ENCODE measurements at regions of chr19 and their contacts with region 1.

Region 1: DNA sequence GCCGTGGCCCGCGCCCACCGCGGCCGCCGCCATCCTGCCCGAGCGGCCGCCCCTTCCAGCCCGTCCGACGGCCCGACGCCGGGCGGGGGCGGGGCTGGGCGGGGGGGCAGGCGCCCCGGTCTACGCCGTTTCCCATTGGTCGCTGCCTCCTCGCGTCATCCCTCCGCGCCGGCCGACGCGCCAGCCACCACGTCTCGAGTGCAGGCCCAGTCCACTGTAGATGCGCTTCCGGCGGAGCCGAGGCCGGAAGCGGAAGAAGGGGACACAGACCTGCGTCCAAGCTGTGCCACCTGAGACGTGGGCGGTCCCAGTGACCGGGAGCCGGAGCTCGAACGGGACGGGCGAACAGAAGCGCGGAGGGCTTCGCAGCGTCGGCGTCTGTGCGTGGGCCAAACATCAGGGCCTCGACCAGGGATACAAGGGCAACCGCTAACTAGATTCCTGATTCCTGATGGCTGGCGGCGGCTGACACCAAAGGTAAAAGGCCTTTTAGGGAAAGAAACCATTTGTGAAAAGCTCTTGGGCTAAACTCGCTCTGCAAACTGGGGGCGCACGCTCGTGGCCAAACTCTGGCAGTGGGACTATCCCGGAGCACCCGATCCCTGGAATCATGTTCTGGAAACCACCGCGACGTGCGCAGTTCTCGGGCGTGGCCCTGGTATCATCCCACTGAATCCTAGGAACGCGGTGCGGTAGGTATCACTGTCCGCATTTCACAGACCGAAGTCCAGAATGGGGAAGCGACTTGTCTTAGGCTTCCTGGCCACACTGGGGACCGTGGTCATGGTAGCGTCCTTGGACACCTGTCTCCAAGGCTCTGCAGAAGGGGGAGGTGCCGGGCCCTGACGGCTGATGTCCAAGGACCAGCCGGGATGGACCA is at the start of gene SLC35E1:
- DNase-seq: peak; percentile 97
- H3K4me3 ChIP-seq: peak within 1 kb of the TSS; percentile 77 to 93 (median 89)
- H3K27ac ChIP-seq: peak within 1 kb of the TSS; percentile 90 to 95 (median 91)
- H3K4me1 ChIP-seq: peaks cover 16 to 34% (median 27%) of the 10 kb centered on the region in 4 donors
- H3K27me3 ChIP-seq: no peaks in the 10 kb centered on the region
- CTCF ChIP-seq: no peak
- EP300 ChIP-seq: peak; percentile 28
- POLR2A ChIP-seq: peak; percentile 86
- total RNA-seq, gene SLC35E1: 31.0 to 56.1 (median 42.8) TPM

Region 2: DNA sequence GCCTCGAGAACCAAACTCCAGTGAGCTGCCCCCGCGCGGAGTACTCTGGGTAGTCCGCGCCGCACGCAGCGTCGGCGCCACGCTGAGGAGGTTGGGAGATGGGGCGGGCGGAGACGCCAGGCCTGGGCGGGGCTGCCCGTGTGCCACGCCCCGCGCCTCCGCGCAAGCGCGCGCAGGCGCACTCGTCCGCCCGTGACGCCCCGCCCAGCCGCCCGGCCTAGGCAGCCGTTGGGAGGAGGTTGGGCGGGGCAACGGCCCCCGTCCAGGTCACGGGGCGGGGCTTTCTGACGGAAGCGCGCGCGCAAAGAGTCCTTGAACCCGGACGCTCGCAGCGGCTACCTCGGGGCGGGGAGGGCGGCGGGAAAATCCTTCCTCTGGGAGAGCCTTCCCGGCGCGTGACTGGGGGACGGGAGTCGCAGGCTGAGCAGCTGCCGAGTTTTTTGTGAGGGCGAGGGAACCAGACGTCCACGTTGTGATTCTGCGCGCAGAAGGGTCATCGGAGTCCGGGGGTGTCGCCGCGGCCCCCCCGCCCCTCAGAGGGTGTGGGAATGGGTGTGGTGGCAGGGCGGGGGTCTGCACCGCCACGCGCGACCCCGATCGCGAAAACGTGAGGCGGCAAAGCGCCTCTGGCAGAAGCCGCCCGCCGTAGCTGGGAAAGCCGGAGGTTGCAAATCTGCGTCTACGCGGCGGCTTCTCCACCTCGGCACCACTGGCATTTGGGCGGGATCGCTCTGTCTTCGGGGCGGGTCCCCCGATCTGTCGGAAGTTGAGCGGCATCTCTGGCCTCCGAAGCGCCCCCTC is 55.8 kb after region 1 on chr19 and contains the start of gene MED26:
- in situ Hi-C with region 1: no loop called
- intact Hi-C with region 1: loop called (anchors 10 kb)
- DNase-seq: peak; percentile 97
- H3K4me3 ChIP-seq: peak within 1 kb of the TSS; percentile 86 to 100 (median 99)
- H3K27ac ChIP-seq: peak within 1 kb of the TSS; percentile 93 to 100 (median 96)
- H3K4me1 ChIP-seq: peaks cover 20 to 33% (median 27%) of the 10 kb centered on the region in 4 donors
- H3K27me3 ChIP-seq: no peaks in the 10 kb centered on the region
- CTCF ChIP-seq: peak in 1 of 5 experiments; percentile 14
- EP300 ChIP-seq: no peak
- POLR2A ChIP-seq: peak; percentile 86
- total RNA-seq, gene MED26: 7.8 to 15.0 (median 9.5) TPM

Region 3: GRCh38 chr19:16860118-16860517 is 287.5 kb after region 1 on chr19:
- in situ Hi-C with region 1: no loop called
- intact Hi-C with region 1: no loop called
- DNase-seq: no peak
- H3K4me3 ChIP-seq: no peak overlapping the region
- H3K27ac ChIP-seq: no peak overlapping the region
- H3K4me1 ChIP-seq: no peaks in the 10 kb centered on the region
- H3K27me3 ChIP-seq: no peaks in the 10 kb centered on the region
- CTCF ChIP-seq: no peak
- EP300 ChIP-seq: no peak
- POLR2A ChIP-seq: no peak